ENCODE measurements at regions of chr15 and their contacts with region 1.

Region 1: DNA sequence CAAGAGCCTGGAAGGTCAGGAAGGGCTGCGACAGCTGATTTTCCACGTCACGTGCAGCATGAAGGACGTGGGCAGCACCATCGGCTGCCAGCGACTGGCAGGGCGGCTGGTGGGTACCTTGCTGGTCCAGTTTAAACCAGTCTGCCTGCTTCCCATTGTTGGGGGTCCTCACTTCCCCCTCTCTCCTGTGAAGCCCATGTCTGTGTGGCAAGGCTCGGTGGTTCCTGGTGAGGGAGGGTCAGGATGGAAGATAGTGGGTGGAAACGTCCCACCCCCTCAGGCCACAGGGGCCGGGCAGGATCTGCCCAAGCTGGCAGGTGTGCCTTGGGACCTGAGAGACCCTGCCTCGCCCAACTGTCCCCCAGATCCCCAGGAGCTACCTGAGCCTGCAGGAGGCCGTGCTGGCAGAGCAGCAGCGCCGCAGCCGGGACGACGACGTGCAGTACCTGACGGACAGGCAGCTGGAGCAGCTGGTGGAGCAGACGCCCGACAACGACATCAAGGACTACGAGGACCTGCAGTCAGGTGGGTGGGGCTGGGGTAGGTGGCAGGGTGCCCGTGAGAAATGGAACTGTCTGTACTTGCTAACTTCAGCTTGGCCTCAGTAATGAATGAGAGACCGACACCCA is 108.2 kb downstream of the LRRK1 start:
- DNase-seq: no peak
- ATAC-seq: no peak

Region 2: GRCh38 chr15:101083336-101084070 is 56.1 kb after region 1 on chr15:
- intact Hi-C with region 1: loop called in 1 of 2 experiments (anchors 5 kb)
- DNase-seq: no peak
- ATAC-seq: no peak

Region 3: GRCh38 chr15:101156509-101157159 is 129.2 kb after region 1 on chr15:
- intact Hi-C with region 1: no loop called
- DNase-seq: no peak
- ATAC-seq: no peak